ENCODE measurements at regions of chr5 and their contacts with region 1.

Region 1: DNA sequence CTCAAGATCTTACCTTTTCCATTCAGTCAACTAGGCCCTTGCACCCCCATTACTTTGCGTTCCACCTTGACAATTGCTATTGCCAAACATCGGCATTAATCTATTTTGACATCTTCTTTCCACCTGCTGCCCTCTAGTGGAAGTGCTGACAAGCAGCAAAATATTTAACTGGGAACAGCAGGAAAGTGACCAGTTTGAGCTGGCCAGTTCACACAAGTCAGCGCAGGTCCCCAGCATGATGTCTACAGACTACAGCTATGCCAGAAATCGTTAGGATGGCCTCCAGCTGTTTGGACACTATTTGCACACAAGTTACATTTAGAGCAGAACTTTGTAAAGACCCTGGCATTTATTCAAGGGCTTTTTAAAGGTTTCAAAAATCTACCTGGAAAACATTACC is 160.1 kb downstream of the GHR start:
- DNase-seq: peak; percentile 60 to 77
- H3K4me3 ChIP-seq: no peak overlapping the region
- H3K27ac ChIP-seq: no peak overlapping the region
- H3K4me1 ChIP-seq: peaks cover 0 to 21% (median 14%) of the 10 kb centered on the region in 4 donors
- H3K27me3 ChIP-seq: no peaks in the 10 kb centered on the region
- CTCF ChIP-seq: peak; percentile 73 to 80

Region 2: DNA sequence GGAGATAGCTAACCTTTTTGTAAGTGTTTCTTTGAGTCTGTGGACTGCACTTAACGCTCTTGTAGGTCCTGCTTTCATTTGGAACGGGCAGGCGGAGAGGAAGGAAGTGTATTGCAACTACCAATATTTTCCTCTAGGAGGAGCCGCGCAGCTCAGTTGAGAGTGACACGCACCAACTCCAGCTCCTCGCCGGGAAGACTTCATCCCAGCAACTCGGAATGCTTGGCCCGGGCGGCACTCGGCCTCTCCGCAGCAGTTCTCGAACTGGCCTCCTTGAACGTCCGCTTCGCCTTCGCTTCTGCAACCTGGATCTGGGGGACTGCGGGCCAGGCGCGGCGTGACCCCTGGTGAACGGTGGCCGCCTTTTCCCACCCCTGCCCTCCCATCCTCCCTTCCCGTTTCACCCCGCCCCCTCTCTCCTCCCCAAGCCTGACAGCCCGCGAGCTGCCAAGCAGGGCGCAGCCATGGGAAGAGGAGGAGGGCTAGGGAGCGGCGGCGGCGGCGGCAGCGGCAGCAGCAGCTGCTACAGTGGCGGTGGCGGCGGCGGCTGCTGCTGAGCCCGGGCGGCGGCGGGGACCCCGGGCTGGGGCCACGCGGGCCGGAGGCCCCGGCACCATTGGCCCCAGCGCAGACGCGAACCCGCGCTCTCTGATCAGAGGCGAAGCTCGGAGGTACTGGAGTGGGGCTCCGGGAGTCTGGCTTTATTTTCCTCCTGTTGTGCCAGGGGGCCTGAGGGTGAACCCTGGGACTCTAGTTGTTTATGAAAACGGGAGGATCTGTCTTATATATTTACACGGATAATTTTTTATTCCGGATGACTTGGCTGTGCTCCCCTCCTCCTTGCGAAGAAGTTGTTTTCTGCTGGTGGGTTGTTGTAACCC is 159.8 kb before region 1 on chr5 and contains the start of gene GHR:
- intact Hi-C with region 1: loop called (anchors 5 kb)
- DNase-seq: peak; percentile 89 to 91
- H3K4me3 ChIP-seq: peak within 1 kb of the TSS; percentile 68 to 73
- H3K27ac ChIP-seq: peak within 1 kb of the TSS; percentile 78 to 85
- H3K4me1 ChIP-seq: peaks cover 0 to 25% (median 4%) of the 10 kb centered on the region in 4 donors
- H3K27me3 ChIP-seq: no peaks in the 10 kb centered on the region
- CTCF ChIP-seq: peak; percentile 81 to 86

Region 3: DNA sequence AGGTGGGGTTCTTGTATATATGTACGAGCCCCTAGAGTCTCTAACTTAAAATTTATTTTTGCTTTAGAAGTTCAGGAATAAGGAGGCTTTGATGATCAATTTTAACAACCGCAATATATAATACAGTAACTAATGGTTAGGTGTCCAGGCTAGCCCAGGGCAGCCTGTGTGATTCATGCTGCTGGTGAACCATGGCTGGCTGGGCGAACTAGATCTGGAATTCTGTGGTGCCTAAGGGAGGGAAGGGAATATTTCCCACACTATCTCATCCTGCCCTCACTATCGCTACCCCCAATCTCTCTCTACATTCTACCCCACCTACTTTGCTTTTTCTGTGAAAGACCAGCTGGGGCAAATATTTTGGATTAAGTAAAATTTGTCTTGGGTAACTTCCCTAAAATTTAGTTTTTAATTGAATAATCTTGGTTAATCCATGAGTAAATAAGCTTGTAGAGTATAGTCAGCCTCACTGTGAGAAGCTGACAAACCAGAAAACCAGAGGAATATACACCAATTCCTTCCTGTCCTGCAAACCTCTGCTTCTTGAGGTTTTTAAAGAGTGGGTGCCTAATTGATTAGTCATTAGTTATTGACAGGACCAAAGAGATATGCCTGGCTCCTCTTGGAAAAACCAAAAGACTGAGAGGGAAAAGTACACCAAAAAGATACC is 58.1 kb after region 1 on chr5:
- intact Hi-C with region 1: no loop called
- DNase-seq: no peak
- H3K4me3 ChIP-seq: no peak overlapping the region
- H3K27ac ChIP-seq: no peak overlapping the region
- H3K4me1 ChIP-seq: no peaks in the 10 kb centered on the region
- H3K27me3 ChIP-seq: no peaks in the 10 kb centered on the region
- CTCF ChIP-seq: no peak

Region 4: GRCh38 chr5:42767491-42768105 is 184.3 kb after region 1 on chr5:
- intact Hi-C with region 1: loop called (anchors 10 kb)
- DNase-seq: no peak
- H3K4me3 ChIP-seq: no peak overlapping the region
- H3K27ac ChIP-seq: no peak overlapping the region
- H3K4me1 ChIP-seq: no peaks in the 10 kb centered on the region
- H3K27me3 ChIP-seq: no peaks in the 10 kb centered on the region
- CTCF ChIP-seq: peak; percentile 49 to 63

Measured in tibial artery (tissue), 4 donors.